Aorta (tissue), 5 donors: ENCODE measurements at regions of chr1 and their contacts with region 1.

Region 1: DNA sequence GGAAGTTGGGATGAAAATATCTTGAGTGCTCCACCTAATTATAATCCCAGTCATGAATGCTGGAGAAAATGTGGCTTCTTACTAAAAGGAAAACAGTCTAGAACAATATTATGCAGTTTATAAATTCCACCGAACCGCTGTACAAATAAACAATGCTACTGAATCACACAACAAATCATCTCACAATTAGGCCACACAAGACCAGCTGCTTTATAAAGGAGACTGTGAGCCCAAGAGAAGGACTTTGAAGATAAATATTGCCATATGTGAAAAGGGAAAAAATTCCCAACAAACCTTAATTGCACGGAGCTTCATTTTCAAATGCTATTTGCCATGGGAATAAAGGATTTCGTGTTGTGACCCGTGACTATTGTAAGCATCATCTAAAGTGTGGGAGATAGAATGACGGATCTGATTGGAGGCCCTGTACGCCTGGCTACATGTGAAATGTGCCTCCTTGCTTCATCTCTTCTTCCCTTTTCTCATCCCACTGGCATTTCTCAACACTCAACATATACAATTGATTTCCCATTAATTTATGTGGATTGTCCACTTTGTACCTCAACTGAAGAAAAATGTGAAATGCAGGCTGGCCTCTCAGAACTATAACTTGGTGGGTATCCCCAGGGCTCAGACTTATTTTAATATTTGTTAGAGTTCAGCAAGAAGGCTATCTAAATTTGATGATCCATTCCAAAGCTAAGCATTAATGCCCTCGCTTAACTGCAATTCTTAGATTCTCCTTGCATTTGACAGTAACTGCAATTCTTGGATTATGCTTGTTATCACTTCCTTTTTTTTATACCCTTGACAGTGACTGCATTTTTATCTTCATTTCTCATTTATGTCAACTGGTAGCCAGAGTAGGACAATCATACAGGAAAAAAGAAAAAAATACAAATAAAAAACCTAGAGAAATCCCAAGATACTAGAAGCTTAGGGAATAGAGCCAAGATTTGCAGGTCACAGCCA is 122.3 kb downstream of the TGFB2 start:
- DNase-seq: no peak
- ATAC-seq: no peak
- H3K4me3 ChIP-seq: no peak overlapping the region
- H3K27ac ChIP-seq: peak overlapping the region in 1 of 2 donors; percentile 15
- H3K4me1 ChIP-seq: peaks cover 0 to 5% of the 10 kb centered on the region in 2 donors
- H3K27me3 ChIP-seq: no peaks in the 10 kb centered on the region

Region 2: DNA sequence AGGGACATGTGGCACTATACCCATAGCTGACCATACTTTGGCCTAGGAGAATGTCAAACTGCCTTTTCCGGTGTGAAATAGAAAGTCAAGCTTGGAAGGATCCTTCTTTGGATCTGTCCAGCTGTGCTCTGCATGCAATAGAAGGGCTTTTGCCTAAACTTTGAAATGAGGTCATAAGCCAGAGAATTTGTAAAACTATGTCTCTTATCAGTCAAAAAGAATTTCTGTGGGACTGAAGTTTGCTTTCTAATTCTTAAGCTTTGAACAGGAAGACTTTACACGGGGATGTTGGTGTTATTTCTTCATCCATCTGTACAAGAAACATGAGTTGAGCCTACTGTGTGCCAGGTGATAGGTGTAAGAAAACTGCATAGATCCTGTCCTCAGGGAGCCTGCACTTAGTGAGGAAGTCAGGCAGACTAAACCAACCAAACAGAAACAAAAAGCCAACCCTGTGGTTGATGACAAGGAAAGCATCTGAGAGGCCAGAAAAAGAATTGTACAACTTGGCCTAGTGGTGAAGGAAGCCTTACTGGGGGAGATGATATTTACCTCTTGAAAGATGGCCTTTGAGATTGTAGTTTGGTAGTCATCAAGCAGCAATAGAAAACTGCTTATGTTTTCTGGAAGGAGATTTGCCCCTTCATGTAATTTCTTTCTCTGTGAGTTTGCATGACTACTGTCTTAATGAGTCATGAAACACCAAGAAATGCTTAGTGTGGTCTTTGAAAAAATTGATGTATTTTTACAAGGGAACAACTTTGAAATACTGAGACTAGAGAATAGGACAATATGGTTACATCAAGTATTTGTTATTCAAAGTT is 97.5 kb before region 1 on chr1:
- intact Hi-C with region 1: loop called in 1 of 2 experiments (anchors 5 kb)
- DNase-seq: no peak
- ATAC-seq: peak; percentile 26
- H3K4me3 ChIP-seq: no peak overlapping the region
- H3K27ac ChIP-seq: peak overlapping the region; percentile 89 to 97
- H3K4me1 ChIP-seq: peaks cover 5 to 9% of the 10 kb centered on the region in 2 donors
- H3K27me3 ChIP-seq: no peaks in the 10 kb centered on the region